ENCODE measurements at regions of chr2 and their contacts with region 1.

Region 1: GRCh38 chr2:67938053-67938452 is 124.8 kb downstream of the C1D start:
- DNase-seq: peak in 1 of 2 donors; percentile 83
- H3K4me3 ChIP-seq: no peak overlapping the region
- H3K27ac ChIP-seq: peak overlapping the region; percentile 77 to 78
- H3K4me1 ChIP-seq: peaks cover 5 to 15% of the 10 kb centered on the region in 2 donors
- H3K27me3 ChIP-seq: no peaks in the 10 kb centered on the region
- CTCF ChIP-seq: no peak

Region 2: DNA sequence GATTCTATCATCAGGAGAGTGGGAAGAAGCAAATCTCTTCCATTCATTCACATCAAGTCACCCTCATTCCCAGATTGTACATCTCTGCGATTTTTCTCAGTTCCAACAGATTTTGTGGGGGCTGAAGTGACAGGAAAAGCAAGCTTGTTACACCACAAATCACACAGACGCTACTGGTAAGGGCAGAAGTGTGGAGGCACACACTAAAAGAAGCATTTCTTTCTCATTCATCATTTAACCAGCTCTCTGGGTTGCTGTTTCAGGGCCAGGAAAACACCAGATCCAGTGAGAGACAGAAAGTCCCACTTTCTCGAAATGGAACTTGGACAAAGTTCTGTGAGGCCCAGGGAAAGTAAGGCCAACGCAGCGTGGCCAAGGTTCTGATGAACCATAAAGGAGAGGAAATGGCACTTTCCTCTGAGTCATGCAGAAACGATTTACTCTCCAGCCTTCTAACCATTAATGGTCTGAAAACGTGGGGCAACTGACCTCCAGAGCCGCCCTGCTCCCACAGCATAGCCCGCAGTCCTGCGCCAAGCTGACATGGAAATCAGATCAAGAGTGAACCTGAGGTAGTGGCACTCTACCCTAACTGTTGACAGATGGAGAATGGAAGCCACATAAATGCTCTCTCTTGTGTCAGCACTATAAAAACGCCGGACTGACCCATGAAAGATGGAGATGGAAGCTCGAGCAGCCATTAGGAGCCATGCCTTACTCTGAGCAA is 66.2 kb before region 1 on chr2:
- intact Hi-C with region 1: loop called (anchors 5 kb)
- DNase-seq: peak; percentile 60 to 91
- H3K4me3 ChIP-seq: no peak overlapping the region
- H3K27ac ChIP-seq: peak overlapping the region; percentile 90 to 91
- H3K4me1 ChIP-seq: peaks cover 7 to 42% of the 10 kb centered on the region in 2 donors
- H3K27me3 ChIP-seq: no peaks in the 10 kb centered on the region
- CTCF ChIP-seq: no peak

Measured in ascending aorta (tissue), 2 donors.